ENCODE measurements at regions of chr7 and their contacts with region 1.

Region 1: DNA sequence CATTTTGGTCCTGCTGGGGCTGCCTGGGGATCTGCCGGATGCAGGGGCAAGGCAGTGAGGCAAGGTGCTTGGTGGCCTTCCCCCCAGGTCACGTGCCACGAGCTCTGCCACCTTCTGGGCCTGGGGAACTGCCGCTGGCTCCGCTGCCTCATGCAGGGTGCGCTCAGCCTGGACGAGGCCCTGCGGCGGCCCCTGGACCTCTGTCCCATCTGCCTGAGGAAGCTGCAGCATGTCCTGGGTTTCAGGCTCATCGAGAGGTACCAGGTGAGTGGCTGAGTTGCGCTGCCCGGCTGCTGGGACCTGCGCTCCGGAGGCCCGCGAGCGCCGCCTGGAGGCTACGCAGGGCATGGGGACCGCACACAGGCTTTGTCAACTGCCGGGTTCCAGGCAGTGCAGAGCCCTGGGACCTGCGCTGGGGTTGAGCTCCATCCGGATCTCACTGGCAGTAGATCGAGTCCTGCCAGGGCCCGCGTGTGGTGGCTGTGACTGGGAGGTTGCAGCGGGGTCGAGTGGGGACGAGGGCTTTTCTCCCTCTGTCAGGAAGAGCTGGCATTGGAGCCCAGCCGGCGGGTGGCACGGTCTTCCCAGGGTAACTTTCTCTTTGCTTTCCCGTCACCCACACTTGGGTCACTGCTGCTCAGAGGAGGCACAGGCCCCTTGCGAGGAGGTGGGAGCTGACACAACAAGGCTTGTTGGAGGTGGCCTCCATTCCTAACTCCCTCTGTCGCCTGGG is 21.7 kb downstream of the AMZ1 start:
- DNase-seq: peak; percentile 81
- ATAC-seq: peak; percentile 79
- H3K4me3 Mint-ChIP-seq: peak overlapping the region; percentile 88
- H3K27ac Mint-ChIP-seq: peak overlapping the region; percentile 94
- H3K4me1 Mint-ChIP-seq: peaks cover 41% of the 10 kb centered on the region
- H3K27me3 Mint-ChIP-seq: no peaks in the 10 kb centered on the region
- CTCF ChIP-seq: peak; percentile 75

Region 2: GRCh38 chr7:2471396-2471795 is 238.3 kb before region 1 on chr7:
- CTCF ChIA-PET with region 1: interaction called, 12 read pairs
- POLR2A ChIA-PET with region 1: interaction called, 5 read pairs
- intact Hi-C with region 1: no loop called
- DNase-seq: no peak
- ATAC-seq: no peak
- H3K4me3 Mint-ChIP-seq: no peak overlapping the region
- H3K27ac Mint-ChIP-seq: no peak overlapping the region
- H3K4me1 Mint-ChIP-seq: peaks cover 4% of the 10 kb centered on the region
- H3K27me3 Mint-ChIP-seq: peaks cover 4% of the 10 kb centered on the region
- CTCF ChIP-seq: no peak

Region 3: DNA sequence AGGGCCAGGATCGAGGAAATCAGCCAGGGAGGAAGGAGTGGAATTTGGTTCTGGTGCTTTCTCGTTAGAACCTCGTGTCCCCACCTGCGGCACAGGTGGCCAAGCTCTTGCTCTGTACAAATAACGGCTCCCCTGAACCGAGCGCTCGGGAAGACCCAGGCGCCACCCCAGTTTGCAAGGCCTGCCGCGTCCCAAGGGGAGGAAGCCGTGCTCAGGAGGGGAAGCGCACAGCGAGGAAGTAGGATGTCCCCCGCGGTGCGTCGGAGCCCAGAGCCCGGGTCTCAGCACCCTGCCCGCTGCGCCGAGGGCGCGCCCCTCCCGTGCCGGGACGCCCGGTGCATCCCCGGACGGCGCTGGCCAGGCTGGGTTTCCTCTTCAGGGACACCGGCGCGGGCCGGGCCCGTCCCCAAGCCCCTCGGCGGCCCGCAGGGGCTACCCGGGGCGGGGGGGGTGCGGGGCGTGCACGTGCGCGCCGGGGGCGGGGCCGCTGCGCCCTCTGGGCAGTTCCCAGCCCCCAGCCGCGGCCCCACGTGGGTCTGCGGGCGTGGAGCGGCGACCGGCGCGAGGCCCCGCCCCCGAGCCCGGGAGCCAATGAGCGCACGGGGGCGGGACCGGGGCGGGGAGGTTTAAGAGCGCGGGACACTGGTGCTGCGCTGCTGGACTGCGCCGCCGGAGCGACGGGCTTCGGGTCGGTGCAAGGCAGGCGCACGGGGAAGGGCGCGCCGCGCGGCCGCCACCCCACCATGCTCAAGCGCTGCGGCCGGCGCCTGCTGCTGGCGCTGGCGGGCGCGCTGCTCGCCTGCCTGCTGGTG is 190.4 kb before region 1 on chr7 and contains the start of gene LFNG:
- CTCF ChIA-PET with region 1: interaction called, 4 read pairs
- POLR2A ChIA-PET with region 1: interaction called, 23 read pairs
- intact Hi-C with region 1: no loop called
- DNase-seq: peak; percentile 94
- ATAC-seq: peak; percentile 75
- H3K4me3 Mint-ChIP-seq: peak within 1 kb of the TSS; percentile 96
- H3K27ac Mint-ChIP-seq: peak within 1 kb of the TSS; percentile 87
- H3K4me1 Mint-ChIP-seq: peaks cover 49% of the 10 kb centered on the region
- H3K27me3 Mint-ChIP-seq: no peaks in the 10 kb centered on the region
- CTCF ChIP-seq: no peak
- total RNA-seq, gene LFNG: 87.4 and 95.8 TPM in 2 replicates

Region 4: DNA sequence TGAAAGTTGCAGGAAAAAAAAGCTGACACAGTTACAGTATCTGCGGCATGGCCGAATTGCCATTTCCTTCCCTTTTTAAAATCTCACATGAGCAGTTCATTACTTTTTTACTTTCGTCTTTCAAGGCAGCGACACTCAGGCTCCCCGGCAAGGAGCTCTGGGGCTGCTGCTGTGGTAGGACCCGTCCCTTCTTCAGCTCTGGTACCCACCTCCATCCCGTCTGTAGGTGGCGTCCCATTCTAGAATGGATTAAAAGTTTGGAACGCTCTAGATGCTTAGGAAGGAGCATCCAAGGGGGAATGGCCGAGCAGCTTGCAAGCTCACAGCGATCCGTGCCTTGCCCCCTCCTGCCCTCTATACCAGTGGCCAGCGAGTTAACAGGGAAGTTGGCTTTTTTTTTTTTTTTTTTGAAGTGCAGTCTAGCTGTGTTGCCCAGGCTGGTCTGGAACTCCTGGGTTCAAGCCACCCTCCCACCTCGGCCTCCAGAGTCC is 100.8 kb before region 1 on chr7:
- CTCF ChIA-PET with region 1: interaction called, 11 read pairs
- POLR2A ChIA-PET with region 1: interaction called, 8 read pairs
- intact Hi-C with region 1: loop called (anchors 2 kb)
- DNase-seq: no peak
- ATAC-seq: peak; percentile 93
- H3K4me3 Mint-ChIP-seq: peak overlapping the region; percentile 71
- H3K27ac Mint-ChIP-seq: peak overlapping the region; percentile 50
- H3K4me1 Mint-ChIP-seq: peaks cover 27% of the 10 kb centered on the region
- H3K27me3 Mint-ChIP-seq: no peaks in the 10 kb centered on the region
- CTCF ChIP-seq: no peak

Region 5: DNA sequence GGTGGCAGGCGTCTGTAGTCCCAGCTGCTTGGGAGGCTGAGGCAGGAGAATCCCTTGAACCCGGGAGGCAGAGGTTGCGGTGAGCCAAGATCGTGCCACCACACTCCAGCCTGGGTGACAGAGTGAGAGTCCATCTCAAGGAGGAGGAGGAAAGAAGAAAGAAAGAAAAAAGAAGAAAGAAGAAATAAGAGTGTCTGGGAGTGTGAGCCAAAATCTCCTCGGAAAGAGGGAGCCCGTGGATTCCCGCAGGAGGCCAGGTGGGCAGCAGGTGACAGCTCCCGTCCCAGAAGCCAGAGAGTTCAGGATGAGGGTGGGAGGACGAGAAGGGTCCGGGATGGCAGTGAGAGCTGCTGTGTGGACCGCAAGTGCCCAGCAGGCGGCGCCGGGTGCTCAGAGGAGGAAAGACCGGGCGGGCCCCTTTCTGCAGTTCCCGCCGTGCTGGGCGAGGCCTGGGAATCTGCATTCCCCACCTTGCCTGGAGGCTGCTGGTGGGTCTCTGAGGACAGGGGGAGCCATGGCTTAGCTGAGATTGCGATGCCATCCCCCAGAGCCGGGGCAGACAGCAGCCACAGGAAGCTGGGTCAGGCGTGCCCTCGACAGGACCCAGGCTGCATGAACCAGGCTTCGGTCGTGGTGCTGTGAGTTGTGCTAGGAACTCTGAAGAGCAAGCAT is 38.9 kb before region 1 on chr7:
- CTCF ChIA-PET with region 1: interaction called, 66 read pairs
- POLR2A ChIA-PET with region 1: interaction called, 21 read pairs
- intact Hi-C with region 1: loop called (anchors 1 kb)
- DNase-seq: peak; percentile 65
- ATAC-seq: peak; percentile 87
- H3K4me3 Mint-ChIP-seq: no peak overlapping the region
- H3K27ac Mint-ChIP-seq: no peak overlapping the region
- H3K4me1 Mint-ChIP-seq: peaks cover 7% of the 10 kb centered on the region
- H3K27me3 Mint-ChIP-seq: peaks cover 11% of the 10 kb centered on the region
- CTCF ChIP-seq: peak; percentile 64

Region 6: GRCh38 chr7:2698581-2699288 is 11.0 kb before region 1 on chr7:
- CTCF ChIA-PET with region 1: interaction called, 43 read pairs
- POLR2A ChIA-PET with region 1: interaction called, 118 read pairs
- intact Hi-C with region 1: loop called (anchors 1 kb)
- DNase-seq: peak; percentile 50
- ATAC-seq: peak; percentile 94
- H3K4me3 Mint-ChIP-seq: peak overlapping the region; percentile 69
- H3K27ac Mint-ChIP-seq: peak overlapping the region; percentile 75
- H3K4me1 Mint-ChIP-seq: peaks cover 21% of the 10 kb centered on the region
- H3K27me3 Mint-ChIP-seq: peaks cover 2% of the 10 kb centered on the region
- CTCF ChIP-seq: no peak

Region 7: GRCh38 chr7:2771274-2771731 is 61.6 kb after region 1 on chr7:
- CTCF ChIA-PET with region 1: interaction called, 3 read pairs
- POLR2A ChIA-PET with region 1: interaction called, 10 read pairs
- intact Hi-C with region 1: no loop called
- DNase-seq: no peak
- ATAC-seq: no peak
- H3K4me3 Mint-ChIP-seq: no peak overlapping the region
- H3K27ac Mint-ChIP-seq: peak overlapping the region; percentile 35
- H3K4me1 Mint-ChIP-seq: peaks cover 50% of the 10 kb centered on the region
- H3K27me3 Mint-ChIP-seq: no peaks in the 10 kb centered on the region
- CTCF ChIP-seq: no peak